HepG2 (cell line): ENCODE measurements at regions of chr9 and their contacts with region 1.

Region 1: GRCh38 chr9:87324613-87325194 is 173.0 kb upstream of the DAPK1 start:
- DNase-seq: peak; percentile 50
- ATAC-seq: peak; percentile 65; the same call in 2 of the 3 replicates
- H3K4me3 ChIP-seq: no peak overlapping the region
- H3K27ac ChIP-seq: no peak overlapping the region
- H3K4me1 ChIP-seq: no peaks in the 10 kb centered on the region
- H3K27me3 ChIP-seq: no peaks in the 10 kb centered on the region
- CTCF ChIP-seq: peak; percentile 83
- EP300 ChIP-seq: no peak
- POLR2A ChIP-seq: no peak
- RAD21 ChIP-seq: peak; percentile 71; the same call in 1 of the 2 replicates

Region 2: DNA sequence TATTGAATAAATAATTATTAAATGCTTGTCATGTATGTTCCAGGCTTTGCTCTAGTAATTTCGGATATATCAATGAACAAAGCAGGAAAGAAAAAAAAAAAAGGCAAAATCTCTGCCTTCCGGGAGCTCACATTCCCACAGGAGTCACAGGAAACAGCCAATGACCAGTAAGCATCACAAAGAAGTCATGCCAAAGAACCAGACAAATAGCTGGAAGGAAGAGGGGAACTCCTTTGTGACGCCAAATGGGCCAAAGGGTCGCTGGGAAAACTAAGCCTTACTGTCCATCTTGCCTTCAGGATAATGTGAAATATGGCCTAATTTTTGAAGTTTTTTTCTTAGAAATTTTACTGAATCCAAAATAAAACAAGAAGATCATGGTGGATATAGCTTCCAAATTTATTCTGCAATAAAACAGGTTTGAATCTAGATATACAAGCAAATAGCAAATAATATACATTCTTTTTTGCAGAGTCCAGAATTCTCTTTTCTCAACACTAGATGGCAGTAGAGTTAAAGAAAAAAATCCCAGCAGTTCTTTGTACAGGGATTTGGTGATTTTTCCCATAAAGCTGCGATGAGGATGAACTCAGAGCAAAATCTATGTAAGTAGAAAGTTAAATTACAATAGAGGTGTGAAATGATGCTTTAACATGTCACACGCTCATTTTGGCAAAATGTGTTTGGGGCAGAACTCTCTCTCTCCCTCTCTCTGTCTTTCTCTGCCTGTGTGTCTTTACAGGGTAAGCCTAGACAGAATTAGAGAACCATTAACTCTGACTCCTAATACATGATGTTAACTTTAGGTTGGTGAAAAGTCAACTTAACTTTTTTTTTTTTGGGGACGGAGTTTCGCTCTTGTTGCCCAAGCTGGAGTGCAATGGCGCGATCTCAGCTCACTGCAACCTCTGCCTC is 910.5 kb before region 1 on chr9:
- CTCF ChIA-PET with region 1: interaction called, 11 read pairs
- POLR2A ChIA-PET with region 1: no interaction called
- in situ Hi-C with region 1: no loop called
- intact Hi-C with region 1: loop called (anchors 2 kb)
- DNase-seq: peak; percentile 25
- ATAC-seq: peak; percentile 56; the same call in 2 of the 3 replicates
- H3K4me3 ChIP-seq: no peak overlapping the region
- H3K27ac ChIP-seq: no peak overlapping the region
- H3K4me1 ChIP-seq: no peaks in the 10 kb centered on the region
- H3K27me3 ChIP-seq: no peaks in the 10 kb centered on the region; a peak in 1 of 5 replicates
- CTCF ChIP-seq: peak; percentile 56
- EP300 ChIP-seq: no peak
- POLR2A ChIP-seq: no peak
- RAD21 ChIP-seq: no peak

Region 3: DNA sequence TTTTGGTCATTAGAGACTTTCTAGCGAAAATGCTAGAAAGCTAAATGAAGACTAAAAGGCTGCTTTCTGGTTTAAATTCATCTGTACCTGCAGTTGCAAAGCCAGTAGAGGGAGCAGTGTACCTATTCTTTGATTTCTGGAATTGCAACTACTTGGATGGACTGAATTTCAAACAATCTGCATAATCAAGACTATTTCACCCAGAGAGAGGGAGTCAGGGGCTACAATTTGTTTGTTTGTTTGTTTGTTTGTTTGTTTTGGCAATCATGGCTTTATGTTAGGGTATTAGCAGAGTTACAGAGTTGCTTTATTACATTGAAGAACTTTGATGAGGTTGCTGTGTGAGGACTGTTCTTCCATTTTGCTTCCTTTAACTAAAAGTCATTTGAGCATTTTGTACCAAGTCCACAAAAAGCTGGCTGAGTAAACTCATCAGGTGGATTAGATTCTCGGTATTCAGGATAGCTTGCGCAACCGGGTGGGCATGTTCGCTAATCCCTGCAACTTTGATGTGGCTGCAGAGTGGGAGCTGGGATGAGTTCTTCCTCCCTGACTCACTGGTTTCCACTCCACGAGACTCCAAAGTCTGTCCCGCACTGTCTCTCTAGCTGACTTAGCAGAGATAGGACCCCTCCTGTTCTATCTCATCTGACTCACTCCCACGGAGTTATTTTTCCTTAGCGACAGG is 890.5 kb before region 1 on chr9:
- CTCF ChIA-PET with region 1: interaction called, 20 read pairs
- POLR2A ChIA-PET with region 1: no interaction called
- in situ Hi-C with region 1: loop called (anchors 10 kb)
- intact Hi-C with region 1: loop called (anchors 1 kb)
- DNase-seq: peak; percentile 39
- ATAC-seq: peak; percentile 61; the same call in 2 of the 3 replicates
- H3K4me3 ChIP-seq: no peak overlapping the region
- H3K27ac ChIP-seq: no peak overlapping the region
- H3K4me1 ChIP-seq: peaks cover 6% of the 10 kb centered on the region
- H3K27me3 ChIP-seq: no peaks in the 10 kb centered on the region
- CTCF ChIP-seq: peak; percentile 75
- EP300 ChIP-seq: no peak
- POLR2A ChIP-seq: no peak
- RAD21 ChIP-seq: peak; percentile 50; the same call in 1 of the 2 replicates

Region 4: DNA sequence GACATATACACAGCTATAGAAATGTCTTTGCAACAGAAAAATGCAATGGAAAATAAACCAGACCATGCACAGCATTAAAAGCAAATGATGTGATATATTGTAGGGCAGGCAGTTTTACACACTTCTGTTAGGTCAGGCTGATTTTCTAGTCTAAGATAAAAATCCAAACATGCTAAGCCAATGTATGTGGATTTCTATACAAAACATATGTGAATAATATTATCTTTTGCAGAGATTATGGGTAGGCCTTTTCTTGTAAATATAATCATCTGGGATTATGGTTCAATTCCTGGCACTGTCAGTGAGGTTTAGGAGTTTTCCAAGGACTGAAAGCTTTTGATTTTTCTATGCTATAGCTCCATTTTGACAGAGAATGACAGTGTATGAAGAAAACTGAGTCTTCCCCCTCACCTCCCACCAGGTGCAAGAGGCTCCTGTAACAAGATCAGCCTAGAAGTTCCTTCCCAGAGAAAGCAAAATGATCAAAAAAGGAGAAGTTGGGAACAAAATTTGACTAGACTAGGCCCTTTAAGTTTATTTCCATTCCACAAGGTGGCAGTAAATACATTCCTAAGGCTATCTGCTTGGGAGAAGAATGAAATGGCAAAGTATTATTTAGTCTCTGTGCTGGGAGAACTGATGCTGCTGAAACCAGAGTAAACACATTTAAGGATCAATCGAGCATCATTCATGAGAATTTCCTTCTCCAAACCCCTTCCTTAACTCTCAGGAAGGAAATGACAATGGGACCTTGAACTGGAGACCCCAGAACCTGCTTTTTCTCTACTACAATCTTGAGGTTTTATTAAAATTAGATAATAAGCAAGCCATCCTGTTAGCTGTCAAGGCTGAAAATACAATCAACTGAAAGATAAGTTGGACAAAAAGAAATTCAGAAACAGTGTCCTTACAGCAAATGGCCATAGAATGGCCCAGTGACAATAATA is 837.5 kb before region 1 on chr9:
- CTCF ChIA-PET with region 1: interaction called, 15 read pairs
- POLR2A ChIA-PET with region 1: no interaction called
- in situ Hi-C with region 1: loop called (anchors 5 kb)
- intact Hi-C with region 1: loop called (anchors 1 kb)
- DNase-seq: peak; percentile 23
- ATAC-seq: no peak
- H3K4me3 ChIP-seq: no peak overlapping the region
- H3K27ac ChIP-seq: no peak overlapping the region
- H3K4me1 ChIP-seq: no peaks in the 10 kb centered on the region
- H3K27me3 ChIP-seq: no peaks in the 10 kb centered on the region; a peak in 2 of 5 replicates
- CTCF ChIP-seq: peak; percentile 55
- EP300 ChIP-seq: no peak
- POLR2A ChIP-seq: no peak
- RAD21 ChIP-seq: peak; percentile 28; the same call in 1 of the 2 replicates

Region 5: DNA sequence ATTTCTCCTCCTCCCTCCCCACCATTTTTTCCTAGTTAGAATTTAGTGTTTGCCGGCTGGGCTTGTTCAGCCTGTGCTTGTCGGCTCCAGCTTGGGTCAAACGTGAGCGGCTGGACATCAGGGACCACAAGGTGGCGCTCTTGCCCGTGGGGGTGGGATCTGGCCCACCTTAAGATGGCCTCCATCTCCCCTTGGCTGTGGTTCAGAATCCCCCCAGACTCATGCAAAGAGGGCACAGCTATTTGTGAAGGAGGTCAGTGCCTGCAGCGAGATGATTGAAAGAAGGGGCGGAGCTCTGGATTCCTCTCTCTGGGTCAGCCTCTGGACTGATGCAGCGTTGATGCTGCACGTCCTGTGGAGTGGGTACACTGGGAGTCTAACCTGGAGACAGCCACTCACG is 687.2 kb before region 1 on chr9:
- CTCF ChIA-PET with region 1: no interaction called
- POLR2A ChIA-PET with region 1: no interaction called
- in situ Hi-C with region 1: loop called (anchors 10 kb)
- intact Hi-C with region 1: loop called (anchors 5 kb)
- DNase-seq: no peak
- ATAC-seq: peak; percentile 47; the same call in 2 of the 3 replicates
- H3K4me3 ChIP-seq: no peak overlapping the region
- H3K27ac ChIP-seq: no peak overlapping the region
- H3K4me1 ChIP-seq: no peaks in the 10 kb centered on the region
- H3K27me3 ChIP-seq: peaks cover 0 to under 1% of the 10 kb centered on the region in 2 experiments; a peak in 3 of 5 replicates
- CTCF ChIP-seq: peak; percentile 72
- EP300 ChIP-seq: no peak
- POLR2A ChIP-seq: no peak
- RAD21 ChIP-seq: 0 out of 2 replicates have a peak, but pooled peaks have one; percentile 11

Region 6: GRCh38 chr9:86846656-86847055 is 478.0 kb before region 1 on chr9:
- CTCF ChIA-PET with region 1: no interaction called
- POLR2A ChIA-PET with region 1: no interaction called
- in situ Hi-C with region 1: no loop called
- intact Hi-C with region 1: no loop called
- DNase-seq: no peak
- ATAC-seq: no peak
- H3K4me3 ChIP-seq: no peak overlapping the region
- H3K27ac ChIP-seq: no peak overlapping the region
- H3K4me1 ChIP-seq: no peaks in the 10 kb centered on the region
- H3K27me3 ChIP-seq: peaks cover 0 to 8% of the 10 kb centered on the region in 2 experiments; a peak in 1 of 5 replicates
- CTCF ChIP-seq: no peak
- EP300 ChIP-seq: no peak
- POLR2A ChIP-seq: no peak
- RAD21 ChIP-seq: no peak

Region 7: DNA sequence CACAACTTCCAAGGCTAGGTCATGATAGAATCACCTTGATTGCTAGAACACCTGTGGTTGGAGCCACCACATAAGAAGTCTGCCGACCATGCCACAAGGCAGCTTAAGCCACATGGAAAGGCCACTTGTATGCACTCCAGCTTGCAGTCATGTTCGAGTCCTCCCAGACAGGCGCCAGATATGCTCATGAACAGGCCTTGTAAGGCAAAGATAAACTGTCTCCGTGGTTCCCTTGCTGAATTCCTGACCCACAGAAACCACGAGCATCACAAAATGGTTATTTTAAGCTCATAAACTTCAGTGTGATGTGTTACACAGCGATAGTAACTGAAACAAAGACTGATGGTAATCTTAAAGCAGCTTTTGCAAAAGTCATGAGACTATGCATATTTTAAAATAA is 15.5 kb before region 1 on chr9:
- CTCF ChIA-PET with region 1: no interaction called
- POLR2A ChIA-PET with region 1: no interaction called
- in situ Hi-C with region 1: no loop called
- intact Hi-C with region 1: no loop called
- DNase-seq: no peak
- ATAC-seq: no peak
- H3K4me3 ChIP-seq: no peak overlapping the region
- H3K27ac ChIP-seq: no peak overlapping the region
- H3K4me1 ChIP-seq: no peaks in the 10 kb centered on the region
- H3K27me3 ChIP-seq: peaks cover 0 to 4% of the 10 kb centered on the region in 2 experiments; a peak in 1 of 5 replicates
- CTCF ChIP-seq: no peak
- EP300 ChIP-seq: no peak
- POLR2A ChIP-seq: no peak
- RAD21 ChIP-seq: no peak

Region 8: DNA sequence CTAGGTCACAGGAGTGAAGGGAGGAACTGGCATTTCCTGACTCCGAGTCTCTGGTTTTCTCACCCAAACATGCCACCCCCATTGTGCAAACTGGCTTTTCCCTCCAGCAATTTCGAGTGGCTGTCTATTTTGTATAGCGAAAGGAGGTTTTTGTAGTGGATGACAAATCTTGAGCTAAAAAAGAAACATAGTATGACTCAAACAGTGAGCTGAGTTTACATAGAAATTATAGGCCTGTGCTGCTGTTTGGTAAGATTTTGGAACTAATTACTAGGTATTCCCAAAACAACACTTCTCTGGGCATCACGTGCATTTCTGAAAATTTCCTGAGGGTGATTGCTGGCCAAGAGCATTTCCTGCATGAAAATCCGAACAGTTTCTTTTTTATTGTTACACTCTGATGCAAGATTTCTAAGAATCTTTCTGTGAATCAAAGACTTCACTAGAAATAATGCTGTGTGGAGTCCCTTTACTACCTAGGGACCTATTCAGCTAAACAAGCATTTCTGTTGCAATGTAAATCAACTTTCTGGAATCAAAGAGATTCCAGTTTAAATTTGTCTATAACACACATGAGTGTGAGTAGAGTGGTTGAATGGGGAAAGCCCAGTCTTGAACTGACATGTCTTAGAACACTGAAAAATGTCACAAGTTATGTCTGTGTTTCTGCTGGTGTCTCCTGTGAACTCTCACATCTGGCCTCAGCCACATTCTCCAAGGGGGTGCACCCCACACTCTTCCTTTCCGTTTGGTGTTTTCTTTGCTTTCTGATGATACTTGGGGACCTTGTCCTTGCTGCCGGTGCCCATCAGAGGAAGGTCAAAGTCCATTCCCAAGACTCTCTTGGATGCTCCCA is 139.6 kb after region 1 on chr9:
- CTCF ChIA-PET with region 1: no interaction called
- POLR2A ChIA-PET with region 1: no interaction called
- in situ Hi-C with region 1: no loop called
- intact Hi-C with region 1: no loop called
- DNase-seq: no peak
- ATAC-seq: no peak
- H3K4me3 ChIP-seq: no peak overlapping the region
- H3K27ac ChIP-seq: no peak overlapping the region
- H3K4me1 ChIP-seq: no peaks in the 10 kb centered on the region
- H3K27me3 ChIP-seq: no peaks in the 10 kb centered on the region
- CTCF ChIP-seq: no peak
- EP300 ChIP-seq: no peak
- POLR2A ChIP-seq: no peak
- RAD21 ChIP-seq: no peak

Region 9: DNA sequence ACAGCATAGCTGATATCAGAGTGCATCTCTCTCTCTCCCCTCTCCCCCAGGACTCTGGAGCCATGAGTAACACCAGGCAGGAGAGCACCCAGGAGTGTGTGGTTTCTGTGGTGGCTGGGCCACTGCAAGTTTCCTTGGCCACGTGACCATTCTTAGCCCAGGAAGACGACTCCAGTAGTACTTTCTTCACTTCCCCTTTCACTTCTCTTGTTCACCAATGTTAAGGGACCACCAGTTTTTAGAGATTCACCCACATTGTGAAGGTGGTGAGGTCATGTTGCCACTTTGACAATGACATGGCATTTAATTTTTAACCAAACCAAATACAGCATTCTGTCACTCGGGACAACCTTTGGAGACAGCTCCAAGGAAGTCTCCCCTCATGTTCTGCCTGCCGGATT is 155.1 kb after region 1 on chr9:
- CTCF ChIA-PET with region 1: no interaction called
- POLR2A ChIA-PET with region 1: no interaction called
- in situ Hi-C with region 1: no loop called
- intact Hi-C with region 1: no loop called
- DNase-seq: peak; percentile 50
- ATAC-seq: peak; percentile 86
- H3K4me3 ChIP-seq: peak overlapping the region; percentile 8 to 34 (median 29); a peak in 3 of 6 replicates
- H3K27ac ChIP-seq: no peak overlapping the region
- H3K4me1 ChIP-seq: peaks cover 11% of the 10 kb centered on the region
- H3K27me3 ChIP-seq: no peaks in the 10 kb centered on the region
- CTCF ChIP-seq: no peak
- EP300 ChIP-seq: no peak
- POLR2A ChIP-seq: no peak
- RAD21 ChIP-seq: no peak